GM12878 (cell line): ENCODE measurements at regions of chr4 and their contacts with region 1.

Region 1: DNA sequence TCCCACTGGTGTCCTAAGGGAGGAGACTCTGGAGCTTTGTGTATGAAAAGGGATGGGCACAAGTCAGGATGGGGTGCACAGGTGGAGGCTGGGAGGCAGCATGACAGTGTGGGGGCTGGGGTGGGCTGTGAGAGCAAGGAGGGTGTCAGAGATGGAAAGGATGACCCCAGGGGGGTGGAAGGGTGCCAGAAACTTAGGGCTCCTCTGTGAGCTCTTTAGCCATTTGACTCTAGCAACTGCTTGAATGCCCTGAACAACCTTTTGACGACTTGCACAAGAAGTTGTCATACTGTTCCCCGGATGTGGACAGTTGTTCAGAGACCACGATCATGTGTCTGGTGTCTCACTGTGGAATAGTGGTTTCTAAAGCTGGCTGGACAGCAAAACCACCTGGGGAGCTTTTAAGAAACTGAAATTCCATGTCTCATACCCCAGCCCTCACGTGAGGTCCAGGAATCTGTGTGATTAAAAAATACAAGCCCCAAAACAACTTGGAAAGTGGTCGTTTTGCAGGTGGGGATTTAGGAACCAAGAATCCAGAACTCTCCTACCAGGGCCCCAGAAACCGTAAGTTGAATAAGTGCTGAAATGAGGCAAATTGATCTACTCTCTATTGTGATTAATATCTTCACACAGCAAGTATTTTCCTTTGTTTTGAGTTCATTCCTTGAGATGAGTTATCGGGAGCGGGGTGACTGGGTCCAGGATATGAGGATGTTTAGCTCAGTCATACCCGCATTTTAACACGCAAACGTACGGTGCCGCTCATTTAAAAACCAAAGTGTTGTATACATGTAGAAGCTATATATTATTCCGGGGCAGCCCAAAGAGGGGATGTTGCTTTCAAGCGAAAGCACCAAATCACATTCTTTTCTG is 3.4 kb downstream of the RHOH start:
- DNase-seq: peak; percentile 93
- ATAC-seq: peak; percentile 52
- H3K4me3 ChIP-seq: peak overlapping the region; percentile 88
- H3K27ac ChIP-seq: peak overlapping the region; percentile 92
- H3K4me1 ChIP-seq: peaks cover 8% of the 10 kb centered on the region
- H3K27me3 ChIP-seq: no peaks in the 10 kb centered on the region
- CTCF ChIP-seq: no peak
- EP300 ChIP-seq: peak; percentile 79 to 93
- POLR2A ChIP-seq: peak; percentile 79
- RAD21 ChIP-seq: no peak

Region 2: DNA sequence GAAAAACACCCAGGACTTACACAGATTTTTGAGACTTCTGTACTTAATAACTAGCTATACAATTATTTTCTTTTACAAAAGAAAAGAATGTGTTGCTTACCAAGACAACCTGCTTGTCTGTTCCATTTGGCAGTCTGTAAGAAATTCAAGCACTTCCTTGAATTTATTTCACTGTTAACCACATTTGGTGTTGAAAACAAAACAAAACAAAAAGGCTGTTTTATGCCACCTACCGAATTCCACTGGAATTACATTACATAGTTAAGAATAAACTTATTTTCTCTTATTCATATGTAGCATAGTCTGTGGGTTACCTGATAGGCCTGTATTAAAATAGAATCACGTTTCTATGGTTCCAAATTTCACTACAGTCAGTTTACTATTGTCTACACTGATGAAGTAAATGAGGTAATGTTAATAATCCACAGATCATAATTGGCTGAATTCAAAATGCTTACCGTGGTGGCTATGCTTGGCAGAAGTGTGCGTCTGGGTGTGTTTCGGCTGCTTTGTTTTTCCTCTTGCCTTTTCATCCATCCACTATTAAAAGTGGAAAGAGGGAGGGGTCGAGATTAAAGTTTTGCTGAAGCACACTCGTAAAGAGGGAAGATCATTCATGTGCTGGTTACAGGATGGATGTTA is 1395.5 kb before region 1 on chr4 and contains the start of gene TLR1:
- CTCF ChIA-PET with region 1: no interaction called
- POLR2A ChIA-PET with region 1: no interaction called
- RAD21 ChIA-PET with region 1: no interaction called
- SMC1A ChIA-PET with region 1: no interaction called
- in situ Hi-C with region 1: loop called (anchors 25 kb)
- intact Hi-C with region 1: no loop called
- DNase-seq: peak; percentile 62
- ATAC-seq: peak; percentile 67
- H3K4me3 ChIP-seq: peak within 1 kb of the TSS; percentile 41
- H3K27ac ChIP-seq: peak within 1 kb of the TSS; percentile 86
- H3K4me1 ChIP-seq: peaks cover 20% of the 10 kb centered on the region
- H3K27me3 ChIP-seq: no peaks in the 10 kb centered on the region
- CTCF ChIP-seq: peak; percentile 22 to 47 (median 38); a peak in 5 of 6 replicates
- EP300 ChIP-seq: no peak
- POLR2A ChIP-seq: no peak
- RAD21 ChIP-seq: peak; percentile 64
- polyA plus RNA-seq, gene TLR1: 9.3 to 9.5 TPM

Region 3: DNA sequence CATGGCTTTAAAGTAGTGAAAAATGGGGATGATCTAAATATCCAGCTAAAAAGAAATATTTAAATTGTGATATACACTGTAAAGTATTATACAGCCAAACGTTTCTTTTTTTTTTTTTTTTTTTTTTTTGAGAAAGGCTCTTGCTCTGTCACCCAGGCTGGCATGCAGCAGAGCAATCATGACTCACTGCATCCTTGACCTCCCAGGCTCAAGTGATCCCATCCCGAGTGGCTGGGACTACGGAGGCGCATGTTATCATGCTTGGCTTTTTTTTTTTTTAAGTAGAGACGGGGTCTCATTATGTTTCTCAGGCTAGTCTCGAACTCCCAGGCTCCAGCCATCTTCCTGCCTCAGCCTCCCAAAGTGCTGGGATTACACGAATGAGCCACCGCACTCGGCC is 578.7 kb before region 1 on chr4:
- CTCF ChIA-PET with region 1: no interaction called
- POLR2A ChIA-PET with region 1: interaction called, 3 read pairs
- RAD21 ChIA-PET with region 1: no interaction called
- SMC1A ChIA-PET with region 1: no interaction called
- in situ Hi-C with region 1: no loop called
- intact Hi-C with region 1: loop called (anchors 10 kb)
- DNase-seq: no peak
- ATAC-seq: no peak
- H3K4me3 ChIP-seq: no peak overlapping the region
- H3K27ac ChIP-seq: no peak overlapping the region
- H3K4me1 ChIP-seq: peaks cover 38% of the 10 kb centered on the region
- H3K27me3 ChIP-seq: no peaks in the 10 kb centered on the region
- CTCF ChIP-seq: no peak
- EP300 ChIP-seq: no peak
- POLR2A ChIP-seq: no peak
- RAD21 ChIP-seq: no peak

Region 4: DNA sequence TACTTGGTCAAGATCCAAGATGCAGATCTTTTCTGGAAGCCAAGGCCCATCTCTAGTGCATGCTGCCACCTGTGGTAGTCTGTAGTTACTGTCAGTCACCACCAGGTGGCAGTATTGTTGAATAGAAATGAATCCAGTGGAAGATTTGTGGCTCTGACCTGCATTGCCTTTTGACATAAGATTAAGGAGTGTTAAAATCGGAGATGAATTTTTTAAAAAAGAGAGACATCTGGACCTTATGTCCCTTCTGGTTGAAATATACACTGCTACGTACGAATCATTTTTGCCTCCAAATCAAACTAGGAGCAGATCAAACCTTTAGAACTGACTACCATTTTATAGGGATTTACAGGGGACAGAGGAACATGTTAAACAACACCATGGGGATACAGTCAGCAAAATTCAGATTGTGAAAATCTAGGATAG is 50.3 kb before region 1 on chr4:
- CTCF ChIA-PET with region 1: interaction called, 20 read pairs
- POLR2A ChIA-PET with region 1: interaction called, 8 read pairs
- RAD21 ChIA-PET with region 1: interaction called, 17 read pairs
- SMC1A ChIA-PET with region 1: interaction called, 53 read pairs
- in situ Hi-C with region 1: no loop called
- intact Hi-C with region 1: loop called (anchors 2 kb)
- DNase-seq: peak; percentile 79
- ATAC-seq: peak; percentile 95
- H3K4me3 ChIP-seq: no peak overlapping the region
- H3K27ac ChIP-seq: no peak overlapping the region
- H3K4me1 ChIP-seq: no peaks in the 10 kb centered on the region
- H3K27me3 ChIP-seq: no peaks in the 10 kb centered on the region
- CTCF ChIP-seq: peak; percentile 72 to 85 (median 73)
- EP300 ChIP-seq: no peak
- POLR2A ChIP-seq: no peak
- RAD21 ChIP-seq: peak; percentile 95

Region 5: DNA sequence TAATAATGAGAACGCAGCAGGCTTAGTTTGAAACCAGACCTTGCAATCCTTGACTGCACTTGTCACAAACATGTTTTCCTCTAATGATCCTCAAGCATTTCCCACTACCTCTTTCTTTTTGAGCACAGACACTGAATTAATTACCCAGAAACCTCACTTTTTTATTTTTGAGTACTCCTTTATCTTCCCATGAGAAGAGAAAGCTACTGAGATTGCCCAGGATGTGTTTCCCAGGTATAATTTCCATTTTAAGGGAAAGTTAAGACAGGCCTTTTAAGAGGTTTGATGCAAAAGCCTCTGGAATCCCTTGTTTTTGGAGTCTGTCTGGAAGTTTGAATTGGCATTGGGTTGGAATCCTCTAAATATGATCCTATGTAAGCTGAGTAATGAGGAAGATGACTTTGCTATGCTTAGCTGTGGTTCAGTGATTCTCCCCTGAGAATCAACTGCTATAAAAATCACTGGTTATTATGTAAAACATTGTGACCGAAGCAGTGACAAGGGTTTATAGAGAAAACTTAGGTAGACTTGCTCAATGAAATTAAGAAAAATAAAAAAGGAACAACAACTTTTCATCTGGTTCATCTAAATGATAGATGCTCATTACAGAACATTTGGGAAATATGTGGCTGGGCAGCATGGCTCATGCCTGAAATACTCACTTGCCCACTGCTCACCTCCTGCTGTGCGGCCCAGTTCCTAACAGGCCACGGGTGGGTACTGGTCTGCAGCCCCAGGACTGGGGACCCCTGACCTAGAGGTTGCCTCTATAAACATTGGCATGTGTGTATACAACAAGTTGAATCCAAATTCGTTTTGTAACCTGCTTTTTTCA is 14.2 kb before region 1 on chr4:
- CTCF ChIA-PET with region 1: interaction called, 23 read pairs
- POLR2A ChIA-PET with region 1: interaction called, 214 read pairs
- RAD21 ChIA-PET with region 1: interaction called, 179 read pairs
- SMC1A ChIA-PET with region 1: interaction called, 336 read pairs
- in situ Hi-C with region 1: no loop called
- intact Hi-C with region 1: loop called (anchors 2 kb)
- DNase-seq: peak; percentile 94
- ATAC-seq: peak; percentile 66
- H3K4me3 ChIP-seq: no peak overlapping the region
- H3K27ac ChIP-seq: peak overlapping the region; percentile 89
- H3K4me1 ChIP-seq: peaks cover 46% of the 10 kb centered on the region
- H3K27me3 ChIP-seq: no peaks in the 10 kb centered on the region
- CTCF ChIP-seq: no peak
- EP300 ChIP-seq: peak; percentile 81 to 90
- POLR2A ChIP-seq: 0 out of 2 replicates have a peak, but pooled peaks have one; percentile 31
- RAD21 ChIP-seq: 0 out of 2 replicates have a peak, but pooled peaks have one; percentile 0

Region 6: GRCh38 chr4:40228497-40229365 is 28.5 kb after region 1 on chr4:
- CTCF ChIA-PET with region 1: interaction called, 7 read pairs
- POLR2A ChIA-PET with region 1: interaction called, 13 read pairs
- RAD21 ChIA-PET with region 1: interaction called, 56 read pairs
- SMC1A ChIA-PET with region 1: interaction called, 160 read pairs
- in situ Hi-C with region 1: no loop called
- intact Hi-C with region 1: loop called (anchors 1 kb)
- DNase-seq: peak; percentile 77
- ATAC-seq: peak; percentile 56
- H3K4me3 ChIP-seq: peak overlapping the region; percentile 13; the same call in 1 of the 2 replicates
- H3K27ac ChIP-seq: peak overlapping the region; percentile 84
- H3K4me1 ChIP-seq: peaks cover 59% of the 10 kb centered on the region
- H3K27me3 ChIP-seq: no peaks in the 10 kb centered on the region
- CTCF ChIP-seq: peak; percentile 28 to 65 (median 45); a peak in 5 of 6 replicates
- EP300 ChIP-seq: peak in 1 of 2 experiments; percentile 66; a peak in 3 of 4 replicates
- POLR2A ChIP-seq: no peak
- RAD21 ChIP-seq: peak; percentile 44

Region 7: GRCh38 chr4:40340030-40340429 is 139.8 kb after region 1 on chr4:
- CTCF ChIA-PET with region 1: no interaction called
- POLR2A ChIA-PET with region 1: no interaction called
- RAD21 ChIA-PET with region 1: no interaction called
- SMC1A ChIA-PET with region 1: no interaction called
- in situ Hi-C with region 1: no loop called
- intact Hi-C with region 1: no loop called
- DNase-seq: no peak
- ATAC-seq: no peak
- H3K4me3 ChIP-seq: no peak overlapping the region
- H3K27ac ChIP-seq: no peak overlapping the region
- H3K4me1 ChIP-seq: no peaks in the 10 kb centered on the region
- H3K27me3 ChIP-seq: 0 out of 4 replicates have a peak, but pooled peaks cover 0 to 3% of the 10 kb centered on the region in 2 experiments
- CTCF ChIP-seq: no peak
- EP300 ChIP-seq: no peak
- POLR2A ChIP-seq: no peak
- RAD21 ChIP-seq: no peak

Region 8: DNA sequence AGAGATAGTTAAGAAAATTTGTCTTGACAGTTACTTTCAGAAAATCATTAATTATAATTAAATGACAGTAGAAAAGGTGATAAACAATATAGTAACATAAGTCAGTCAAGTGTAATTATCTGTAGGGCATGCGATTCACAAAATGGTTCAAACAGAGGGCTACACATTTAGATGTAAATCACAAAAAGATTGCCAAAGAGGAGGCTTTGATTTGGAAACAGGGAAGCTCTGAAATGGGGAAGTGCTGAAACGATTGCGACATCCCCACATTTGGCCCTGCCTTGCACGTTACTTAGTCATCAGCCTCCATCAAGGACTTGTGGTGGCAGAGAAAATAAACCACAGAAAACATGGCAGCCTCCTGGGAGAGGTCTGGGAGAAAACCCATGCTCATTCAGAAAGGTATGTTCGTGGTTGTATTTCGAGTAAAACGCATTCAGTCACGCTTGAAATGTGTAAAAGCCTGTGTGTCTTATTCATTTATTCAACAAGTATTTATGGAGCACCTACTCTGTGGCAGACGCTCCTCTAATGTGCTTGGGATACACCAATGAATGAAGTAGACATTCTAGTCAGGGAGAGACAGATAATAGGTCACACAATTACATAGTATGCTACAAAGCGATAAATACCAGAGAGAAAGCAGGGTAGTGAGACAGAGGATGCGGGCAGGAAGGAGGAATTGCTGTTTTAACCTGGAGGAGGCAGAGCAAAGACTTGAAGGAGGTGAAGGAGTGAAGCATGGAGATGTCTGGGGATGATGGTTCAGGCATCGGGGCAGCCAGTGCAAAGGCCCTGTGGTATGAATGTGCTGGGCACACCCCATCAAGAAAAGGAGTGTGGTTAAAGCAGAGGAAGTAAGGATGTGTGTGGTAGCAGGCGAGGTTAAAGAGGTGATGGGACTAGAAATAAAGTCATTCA is 421.6 kb after region 1 on chr4:
- CTCF ChIA-PET with region 1: no interaction called
- POLR2A ChIA-PET with region 1: interaction called, 4 read pairs
- RAD21 ChIA-PET with region 1: interaction called, 3 read pairs
- SMC1A ChIA-PET with region 1: interaction called, 4 read pairs
- in situ Hi-C with region 1: no loop called
- intact Hi-C with region 1: loop called (anchors 5 kb)
- DNase-seq: peak; percentile 93
- ATAC-seq: peak; percentile 66
- H3K4me3 ChIP-seq: peak overlapping the region; percentile 58
- H3K27ac ChIP-seq: peak overlapping the region; percentile 93
- H3K4me1 ChIP-seq: peaks cover 38% of the 10 kb centered on the region
- H3K27me3 ChIP-seq: no peaks in the 10 kb centered on the region
- CTCF ChIP-seq: no peak
- EP300 ChIP-seq: peak; percentile 74 to 81
- POLR2A ChIP-seq: no peak; the same call in 1 of the 2 replicates
- RAD21 ChIP-seq: 0 out of 2 replicates have a peak, but pooled peaks have one; percentile 13